Transverse colon (tissue), 4 donors: ENCODE measurements at regions of chr11 and their contacts with region 1.

Region 1: GRCh38 chr11:76680518-76681425 is 10.2 kb upstream of the LRRC32 start:
- DNase-seq: peak; percentile 72
- H3K4me3 ChIP-seq: no peak overlapping the region
- H3K27ac ChIP-seq: no peak overlapping the region
- H3K4me1 ChIP-seq: peaks cover 0 to 8% (median 4%) of the 10 kb centered on the region in 4 donors
- H3K27me3 ChIP-seq: no peaks in the 10 kb centered on the region
- CTCF ChIP-seq: peak; percentile 74 to 87 (median 85)
- EP300 ChIP-seq: no peak
- POLR2A ChIP-seq: no peak

Region 2: DNA sequence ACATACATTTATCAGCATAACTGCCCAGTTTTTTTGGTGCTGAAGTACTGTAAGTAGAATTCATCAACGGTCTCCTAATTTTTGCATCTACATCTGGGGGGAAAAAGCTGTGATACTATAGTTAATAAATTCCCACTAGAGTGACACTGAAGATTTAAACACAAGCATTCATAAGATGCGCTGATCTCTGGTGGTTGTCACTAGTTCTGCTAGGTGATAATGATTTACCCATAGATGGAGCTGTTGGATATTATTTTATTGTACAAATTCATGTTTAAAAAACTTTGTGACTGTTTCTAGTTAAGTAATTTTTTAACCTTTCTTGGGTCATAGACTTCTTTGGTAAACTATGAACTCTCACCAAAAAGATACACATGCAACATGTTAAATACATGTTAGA is 129.4 kb before region 1 on chr11:
- in situ Hi-C with region 1: loop called in 2 of 4 experiments (anchors 10 kb)
- intact Hi-C with region 1: loop called (anchors 10 kb)
- DNase-seq: no peak
- H3K4me3 ChIP-seq: no peak overlapping the region
- H3K27ac ChIP-seq: no peak overlapping the region
- H3K4me1 ChIP-seq: peaks cover 0 to 24% (median 11%) of the 10 kb centered on the region in 4 donors
- H3K27me3 ChIP-seq: no peaks in the 10 kb centered on the region
- CTCF ChIP-seq: peak in 4 of 5 experiments; percentile 16 to 27 (median 22)
- EP300 ChIP-seq: no peak
- POLR2A ChIP-seq: no peak

Region 3: GRCh38 chr11:76560219-76560618 is 120.6 kb before region 1 on chr11:
- in situ Hi-C with region 1: loop called in 3 of 4 experiments (anchors 10 kb)
- intact Hi-C with region 1: loop called (anchors 10 kb)
- DNase-seq: no peak
- H3K4me3 ChIP-seq: no peak overlapping the region
- H3K27ac ChIP-seq: no peak overlapping the region
- H3K4me1 ChIP-seq: peaks cover 0 to 9% (median 1%) of the 10 kb centered on the region in 4 donors
- H3K27me3 ChIP-seq: no peaks in the 10 kb centered on the region
- CTCF ChIP-seq: no peak
- EP300 ChIP-seq: no peak
- POLR2A ChIP-seq: no peak